Activated naive CD4-positive, alpha-beta T cell treated with anti-CD3 and anti-CD28 coated beads for 36 hours (primary cell): ENCODE measurements at regions of chr6 and their contacts with region 1.

Region 1: GRCh38 chr6:157764178-157765033 is 58.6 kb upstream of the SNX9 start:
- DNase-seq: peak; percentile 94
- H3K4me3 Mint-ChIP-seq: peak overlapping the region; percentile 7
- H3K27ac Mint-ChIP-seq: peak overlapping the region; percentile 91
- H3K4me1 Mint-ChIP-seq: peaks cover 86% of the 10 kb centered on the region
- H3K27me3 Mint-ChIP-seq: no peaks in the 10 kb centered on the region

Region 2: GRCh38 chr6:157274471-157275226 is 489.8 kb before region 1 on chr6:
- CTCF ChIA-PET with region 1: no interaction called
- intact Hi-C with region 1: no loop called
- DNase-seq: peak; percentile 86
- H3K4me3 Mint-ChIP-seq: peak overlapping the region; percentile 80
- H3K27ac Mint-ChIP-seq: peak overlapping the region; percentile 75
- H3K4me1 Mint-ChIP-seq: peaks cover 5% of the 10 kb centered on the region
- H3K27me3 Mint-ChIP-seq: no peaks in the 10 kb centered on the region

Region 3: DNA sequence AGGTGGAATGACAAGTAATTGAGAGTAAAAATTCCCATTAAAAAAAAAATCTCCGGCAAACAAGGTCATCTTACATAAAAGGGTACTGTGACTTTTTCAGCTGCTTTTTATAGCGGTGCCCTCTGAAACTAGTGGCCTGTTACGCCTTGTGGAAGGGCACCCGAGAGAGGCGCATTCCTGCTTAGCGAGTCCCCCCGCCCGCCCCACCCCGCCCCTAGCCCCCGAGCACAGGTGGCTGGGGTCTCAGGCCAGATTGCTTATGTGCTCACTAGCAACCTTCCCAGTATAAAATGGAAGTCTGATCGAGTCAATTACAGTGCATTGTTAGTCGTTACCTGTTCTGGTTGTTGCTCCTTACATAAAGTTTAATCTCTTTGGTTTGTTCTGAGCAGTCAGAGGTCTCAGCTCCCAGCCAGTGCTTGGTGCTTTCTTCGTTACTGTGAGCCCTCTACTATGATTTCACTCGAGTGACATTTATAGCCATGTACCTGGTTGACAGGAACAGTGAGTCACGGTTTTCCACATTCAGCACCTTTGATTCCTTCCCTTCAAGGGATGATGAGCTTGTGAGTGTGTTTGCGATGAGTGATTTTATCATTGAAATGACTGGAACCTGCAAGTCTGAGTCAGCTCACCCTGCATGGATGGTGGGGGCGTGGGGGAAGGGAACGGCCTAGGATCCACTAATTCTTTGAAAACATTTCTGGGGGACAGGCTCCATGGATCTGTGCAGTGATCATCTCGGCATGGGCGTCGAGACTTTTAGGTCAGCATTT is 335.8 kb before region 1 on chr6:
- CTCF ChIA-PET with region 1: no interaction called
- intact Hi-C with region 1: loop called (anchors 1 kb)
- DNase-seq: peak; percentile 94
- H3K4me3 Mint-ChIP-seq: peak overlapping the region; percentile 43
- H3K27ac Mint-ChIP-seq: peak overlapping the region; percentile 90
- H3K4me1 Mint-ChIP-seq: peaks cover 43% of the 10 kb centered on the region
- H3K27me3 Mint-ChIP-seq: no peaks in the 10 kb centered on the region

Region 4: DNA sequence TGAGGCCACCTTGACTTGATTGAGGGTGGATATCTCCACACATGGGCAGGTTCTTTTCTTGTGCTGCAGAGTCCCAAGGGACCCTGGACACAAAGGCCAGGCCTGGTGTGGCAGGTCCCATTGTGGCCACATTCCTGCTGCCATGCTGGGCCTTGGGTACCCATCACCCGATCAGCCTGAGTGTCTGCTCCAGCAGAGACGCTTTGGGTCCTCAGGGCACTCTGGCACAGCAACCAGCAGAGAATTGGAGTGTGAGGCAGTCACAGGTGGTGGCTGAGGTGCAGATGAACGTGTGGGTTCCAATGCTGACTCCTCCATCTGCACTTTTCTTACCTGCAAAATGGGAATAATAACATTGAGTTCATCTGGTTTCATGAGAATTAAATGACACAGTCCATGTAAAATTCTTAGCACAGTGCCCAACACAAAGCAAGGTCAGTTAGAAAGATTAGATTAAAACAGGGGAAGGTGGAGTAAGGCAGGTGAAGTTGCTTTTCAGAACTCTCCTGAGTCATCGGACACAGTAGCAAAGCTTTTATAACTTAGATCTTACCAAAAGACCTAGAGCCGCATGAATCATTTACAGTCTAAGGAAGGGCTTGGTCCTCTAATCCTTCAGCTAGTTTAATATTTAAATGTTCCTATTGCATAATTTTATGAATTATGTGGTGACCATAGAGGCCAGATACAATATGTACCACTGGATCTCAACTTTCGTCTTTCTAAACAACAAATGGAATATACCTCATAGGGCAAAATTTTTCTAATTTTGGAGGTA is 143.7 kb before region 1 on chr6:
- CTCF ChIA-PET with region 1: no interaction called
- intact Hi-C with region 1: no loop called
- DNase-seq: no peak
- H3K4me3 Mint-ChIP-seq: no peak overlapping the region
- H3K27ac Mint-ChIP-seq: no peak overlapping the region
- H3K4me1 Mint-ChIP-seq: no peaks in the 10 kb centered on the region
- H3K27me3 Mint-ChIP-seq: no peaks in the 10 kb centered on the region

Region 5: GRCh38 chr6:157800420-157801237 is 36.2 kb after region 1 on chr6:
- CTCF ChIA-PET with region 1: interaction called, 18 read pairs
- intact Hi-C with region 1: loop called (anchors 1 kb)
- DNase-seq: peak; percentile 69
- H3K4me3 Mint-ChIP-seq: peak overlapping the region; percentile 6
- H3K27ac Mint-ChIP-seq: peak overlapping the region; percentile 73
- H3K4me1 Mint-ChIP-seq: peaks cover 70% of the 10 kb centered on the region
- H3K27me3 Mint-ChIP-seq: no peaks in the 10 kb centered on the region

Region 6: DNA sequence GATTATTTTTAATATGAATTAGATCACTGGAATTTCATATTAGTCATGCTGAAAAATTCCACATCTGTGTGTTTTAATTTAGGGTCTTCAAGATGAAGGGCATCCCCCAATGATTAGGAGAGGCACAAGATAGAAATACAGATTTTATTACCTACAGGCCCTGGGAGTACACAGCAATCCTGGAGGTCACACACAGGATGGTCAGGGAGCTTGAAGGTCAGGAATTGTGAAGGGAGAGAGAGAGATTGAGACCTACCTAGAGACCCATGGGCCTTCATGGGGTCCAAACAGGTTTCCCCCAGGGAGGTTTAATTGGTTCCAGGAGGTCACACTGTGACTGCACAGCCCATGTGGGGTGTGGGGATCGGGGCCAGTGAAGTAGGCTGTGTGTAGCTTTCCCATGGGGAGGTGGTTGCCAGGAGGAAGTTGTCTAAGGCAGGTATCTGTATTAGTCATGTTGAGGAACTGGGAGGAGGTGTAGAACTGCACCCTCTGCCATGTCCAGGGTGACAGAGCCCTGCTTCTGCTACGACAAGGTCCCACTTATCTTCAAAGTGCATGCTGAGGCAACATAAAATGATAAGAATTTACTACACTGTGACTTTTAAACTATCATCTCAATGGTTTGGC is 76.9 kb after region 1 on chr6:
- CTCF ChIA-PET with region 1: interaction called, 5 read pairs
- intact Hi-C with region 1: loop called (anchors 1 kb)
- DNase-seq: peak; percentile 36
- H3K4me3 Mint-ChIP-seq: no peak overlapping the region
- H3K27ac Mint-ChIP-seq: peak overlapping the region; percentile 59
- H3K4me1 Mint-ChIP-seq: peaks cover 84% of the 10 kb centered on the region
- H3K27me3 Mint-ChIP-seq: no peaks in the 10 kb centered on the region

Region 7: DNA sequence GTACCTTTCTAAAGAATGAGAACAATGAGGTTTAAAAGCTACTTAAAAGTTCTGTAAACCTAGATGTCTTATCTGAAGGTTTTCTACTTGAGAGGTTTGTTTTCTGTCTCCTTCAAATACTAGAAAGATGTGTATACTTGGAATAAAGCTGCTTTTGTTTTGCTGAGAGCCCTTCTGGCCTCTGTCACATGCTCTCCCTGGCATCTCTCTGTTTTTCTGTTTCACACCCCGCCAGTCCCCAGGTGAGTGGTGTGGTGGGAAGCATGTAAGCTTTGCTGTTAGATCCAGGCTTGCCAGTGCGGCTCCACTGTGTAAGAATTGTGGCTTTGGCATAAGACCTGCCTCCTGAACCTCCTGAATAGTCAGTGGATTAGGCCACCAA is 115.5 kb after region 1 on chr6:
- CTCF ChIA-PET with region 1: interaction called, 142 read pairs
- intact Hi-C with region 1: loop called (anchors 1 kb)
- DNase-seq: peak; percentile 55
- H3K4me3 Mint-ChIP-seq: no peak overlapping the region
- H3K27ac Mint-ChIP-seq: peak overlapping the region; percentile 78
- H3K4me1 Mint-ChIP-seq: peaks cover 87% of the 10 kb centered on the region
- H3K27me3 Mint-ChIP-seq: no peaks in the 10 kb centered on the region

Region 8: DNA sequence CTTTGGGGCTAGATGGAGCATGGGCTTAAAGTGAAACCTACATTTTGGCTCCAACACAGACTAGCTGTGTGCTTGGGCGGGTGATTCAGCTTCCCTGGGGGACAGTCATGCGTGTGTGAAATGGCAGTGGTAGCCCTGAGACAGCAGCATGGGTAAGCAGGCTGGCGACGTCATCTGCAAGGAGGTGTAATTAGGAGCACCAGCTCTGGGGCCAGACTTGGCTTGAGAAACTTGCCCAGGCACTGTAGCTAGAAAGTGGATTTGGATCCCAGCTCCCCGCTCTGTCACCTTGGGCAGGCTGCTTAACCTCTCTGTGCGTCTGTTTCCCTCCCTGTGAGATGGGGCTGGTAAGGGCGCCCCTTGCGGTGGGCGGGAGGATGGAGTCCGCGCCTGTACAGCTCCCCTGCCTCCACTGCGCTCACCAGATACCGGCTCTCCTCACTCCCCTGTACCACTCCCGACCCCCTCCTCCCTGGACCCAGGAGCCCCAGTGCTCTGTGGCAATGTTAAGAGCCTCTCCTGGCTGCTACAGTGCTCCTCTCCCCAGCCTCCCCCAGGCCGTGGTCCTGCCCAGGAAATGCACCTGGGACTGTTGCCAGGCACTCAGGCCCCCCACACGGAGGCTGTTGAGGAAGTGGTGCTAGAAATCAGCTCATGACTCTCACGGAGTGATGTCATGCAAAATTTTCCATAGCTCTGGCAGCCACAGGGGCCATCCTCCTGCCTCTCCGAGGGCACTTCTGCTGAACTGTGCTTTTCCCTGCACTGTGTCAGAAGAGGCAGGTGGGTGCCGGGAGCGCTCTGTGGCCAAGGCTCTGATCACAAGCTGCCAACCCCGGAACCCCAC is 261.9 kb after region 1 on chr6:
- CTCF ChIA-PET with region 1: interaction called, 4 read pairs
- intact Hi-C with region 1: loop called (anchors 1 kb)
- DNase-seq: peak; percentile 91
- H3K4me3 Mint-ChIP-seq: peak overlapping the region; percentile 81
- H3K27ac Mint-ChIP-seq: peak overlapping the region; percentile 99
- H3K4me1 Mint-ChIP-seq: peaks cover 36% of the 10 kb centered on the region
- H3K27me3 Mint-ChIP-seq: no peaks in the 10 kb centered on the region

Region 9: DNA sequence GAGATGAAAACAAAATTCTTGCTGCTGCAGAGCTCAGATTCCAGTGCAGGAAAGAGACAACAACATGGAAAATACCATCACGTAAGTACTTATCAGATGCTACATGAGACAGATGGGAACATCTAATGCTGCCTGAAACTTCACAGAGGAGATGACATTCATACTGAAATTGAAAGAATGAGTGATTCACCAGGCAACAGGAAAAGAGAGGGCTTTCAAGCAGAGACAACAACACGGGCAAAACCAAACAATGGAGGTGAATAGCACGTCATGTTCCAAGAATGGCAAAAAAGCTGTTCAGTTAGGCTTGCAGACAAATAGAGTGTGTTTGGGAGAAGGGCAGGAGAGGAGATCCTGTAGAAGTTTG is 443.0 kb after region 1 on chr6:
- CTCF ChIA-PET with region 1: no interaction called
- intact Hi-C with region 1: loop called (anchors 2 kb)
- DNase-seq: peak; percentile 66
- H3K4me3 Mint-ChIP-seq: peak overlapping the region; percentile 5
- H3K27ac Mint-ChIP-seq: peak overlapping the region; percentile 78
- H3K4me1 Mint-ChIP-seq: peaks cover 34% of the 10 kb centered on the region
- H3K27me3 Mint-ChIP-seq: no peaks in the 10 kb centered on the region

Region 10: GRCh38 chr6:158387036-158387435 is 622.6 kb after region 1 on chr6:
- CTCF ChIA-PET with region 1: no interaction called
- intact Hi-C with region 1: no loop called
- DNase-seq: no peak
- H3K4me3 Mint-ChIP-seq: no peak overlapping the region
- H3K27ac Mint-ChIP-seq: no peak overlapping the region
- H3K4me1 Mint-ChIP-seq: peaks cover 3% of the 10 kb centered on the region
- H3K27me3 Mint-ChIP-seq: no peaks in the 10 kb centered on the region

Region 11: GRCh38 chr6:158488065-158488464 is 723.7 kb after region 1 on chr6:
- CTCF ChIA-PET with region 1: no interaction called
- intact Hi-C with region 1: no loop called
- DNase-seq: peak; percentile 25
- H3K4me3 Mint-ChIP-seq: no peak overlapping the region
- H3K27ac Mint-ChIP-seq: no peak overlapping the region
- H3K4me1 Mint-ChIP-seq: peaks cover 9% of the 10 kb centered on the region
- H3K27me3 Mint-ChIP-seq: no peaks in the 10 kb centered on the region